ENCODE measurements at regions of chr9 and their contacts with region 1.

Region 1: DNA sequence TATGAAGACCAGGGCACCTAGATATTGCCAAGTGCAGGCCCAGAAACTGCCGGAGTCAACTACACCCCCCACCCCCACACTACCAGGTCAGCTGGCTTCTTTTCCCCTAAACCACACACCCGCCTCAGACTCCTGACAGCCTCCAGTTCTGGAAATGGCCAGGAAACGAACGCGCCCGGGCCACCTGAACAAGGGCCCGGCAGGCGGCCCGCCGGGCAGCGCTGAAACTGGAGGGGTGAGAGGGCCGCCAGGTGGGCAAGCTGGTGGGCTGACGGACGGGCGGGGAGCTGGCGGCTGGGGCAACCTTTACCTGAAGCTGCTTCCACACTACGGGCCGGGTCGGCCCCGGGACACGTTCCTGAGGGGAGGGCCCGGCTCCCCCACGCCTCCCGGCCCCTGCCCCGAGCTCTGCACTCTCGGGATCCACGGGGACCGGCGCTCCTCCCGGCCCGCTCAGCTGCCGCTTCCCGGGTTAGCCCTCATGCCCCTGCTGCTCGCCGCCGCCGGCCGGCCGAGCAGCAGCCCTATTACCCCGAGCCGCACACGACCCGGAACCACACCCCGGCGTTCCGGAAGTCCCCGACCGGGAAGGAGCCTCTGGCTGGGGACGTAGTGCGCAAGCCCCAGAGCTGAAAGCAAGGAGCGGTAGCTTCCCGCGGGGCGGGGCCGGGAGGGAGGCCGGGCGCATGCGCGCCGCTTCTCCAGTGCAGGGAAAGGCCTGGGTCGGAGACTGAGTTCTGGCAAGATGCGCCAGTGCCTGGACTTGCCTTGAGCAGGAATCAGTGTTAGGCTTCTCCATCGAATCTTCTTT is at the start of gene MAPKAP1:
- DNase-seq: peak; percentile 95 to 98
- H3K4me3 ChIP-seq: peak within 1 kb of the TSS; percentile 68 to 99
- H3K27ac ChIP-seq: peak within 1 kb of the TSS; percentile 67 to 86
- H3K4me1 ChIP-seq: peaks cover 0 to 22% (median 16%) of the 10 kb centered on the region in 4 donors
- H3K27me3 ChIP-seq: no peaks in the 10 kb centered on the region
- CTCF ChIP-seq: no peak

Region 2: DNA sequence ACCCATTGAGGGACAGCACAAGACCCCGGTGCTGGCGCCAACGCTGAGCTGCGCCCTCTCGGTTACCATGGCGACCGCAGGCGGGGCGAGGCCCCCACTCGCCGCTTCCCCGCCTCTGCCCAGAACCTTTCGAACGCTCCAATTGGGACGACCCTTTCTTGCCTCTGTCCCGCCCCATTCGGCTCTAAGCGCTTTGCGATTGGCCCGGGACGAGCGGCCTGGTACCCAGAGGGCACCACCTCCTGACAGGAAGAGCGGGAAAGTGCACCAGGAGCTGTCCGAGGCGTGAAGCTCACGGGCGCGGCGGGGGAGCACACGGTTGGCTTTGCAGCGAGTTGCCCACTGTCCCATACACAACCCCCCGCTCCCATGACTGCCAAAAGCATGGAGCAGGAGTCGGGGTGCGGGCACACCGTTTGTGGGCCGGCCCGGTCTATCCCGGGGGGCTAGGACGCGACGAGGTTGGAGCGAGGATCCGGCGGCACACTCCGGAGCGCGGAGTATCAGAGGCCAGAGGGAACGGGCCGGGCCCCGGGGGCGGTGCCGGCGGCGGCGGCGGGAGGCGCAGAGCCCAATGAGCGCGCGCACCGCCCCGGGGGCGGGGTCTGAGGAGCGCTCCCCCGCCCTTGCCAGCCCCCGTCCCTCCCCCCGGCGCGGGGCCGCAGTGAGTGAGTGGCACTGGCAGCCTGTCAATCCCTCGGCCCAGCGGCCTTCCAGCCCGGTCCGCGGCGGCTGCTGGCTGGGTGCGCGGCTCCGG is 39.3 kb after region 1 on chr9:
- intact Hi-C with region 1: loop called (anchors 5 kb)
- DNase-seq: peak; percentile 92 to 96
- H3K4me3 ChIP-seq: peak overlapping the region; percentile 85 to 97
- H3K27ac ChIP-seq: peak overlapping the region; percentile 83 to 84
- H3K4me1 ChIP-seq: peaks cover 0 to 30% (median 8%) of the 10 kb centered on the region in 4 donors
- H3K27me3 ChIP-seq: peaks cover 0 to 2% of the 10 kb centered on the region in 2 donors
- CTCF ChIP-seq: no peak

Measured in tibial artery (tissue), 4 donors.